CD4-positive, alpha-beta memory T cell (primary cell): ENCODE measurements at regions of chr2 and their contacts with region 1.

Region 1: DNA sequence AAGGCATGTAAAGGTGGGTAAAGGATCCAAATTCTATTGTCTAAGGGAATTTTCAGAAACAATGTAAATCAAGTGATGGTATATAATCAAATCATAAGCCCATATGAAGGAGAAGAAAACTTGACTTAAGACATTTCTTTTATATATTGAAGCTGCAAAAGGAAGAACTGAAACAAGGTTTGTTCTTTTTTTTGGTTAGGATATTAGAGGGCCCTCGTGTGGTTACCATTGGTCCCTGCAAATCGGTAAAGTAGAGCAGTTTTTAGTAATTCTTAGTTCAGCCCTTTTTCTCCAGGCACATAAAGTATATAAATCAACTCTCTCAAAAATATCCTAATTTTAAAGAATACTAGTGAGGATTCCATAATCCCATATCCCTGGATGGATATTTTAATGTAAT is 105.6 kb upstream of the STK17B start:
- DNase-seq: peak; percentile 46 to 70 (median 64)
- H3K4me3 ChIP-seq: no peak overlapping the region
- H3K4me3 Mint-ChIP-seq: peak overlapping the region in 5 of 8 donors; percentile 0 to 75 (median 40)
- H3K27ac ChIP-seq: peak overlapping the region; percentile 34
- H3K27ac Mint-ChIP-seq: peak overlapping the region; percentile 21 to 95 (median 81)
- H3K4me1 ChIP-seq: peaks cover 38% of the 10 kb centered on the region
- H3K4me1 Mint-ChIP-seq: peaks cover 30 to 60% (median 36%) of the 10 kb centered on the region in 4 donors
- H3K27me3 ChIP-seq: no peaks in the 10 kb centered on the region
- H3K27me3 Mint-ChIP-seq: no peaks in the 10 kb centered on the region

Region 2: GRCh38 chr2:196068271-196069209 is 208.5 kb before region 1 on chr2 and contains the start of gene DNAH7:
- CTCF ChIA-PET with region 1: interaction called, 13 read pairs
- POLR2A ChIA-PET with region 1: interaction called, 4 read pairs
- intact Hi-C with region 1: no loop called
- DNase-seq: peak; percentile 92 to 96 (median 92)
- H3K4me3 ChIP-seq: peak within 1 kb of the TSS; percentile 54 to 68
- H3K4me3 Mint-ChIP-seq: peak within 1 kb of the TSS; percentile 84 to 91 (median 86)
- H3K27ac ChIP-seq: peak within 1 kb of the TSS; percentile 27
- H3K27ac Mint-ChIP-seq: peak within 1 kb of the TSS; percentile 81 to 95 (median 86)
- H3K4me1 ChIP-seq: peaks cover 18% of the 10 kb centered on the region
- H3K4me1 Mint-ChIP-seq: peaks cover 5 to 15% (median 8%) of the 10 kb centered on the region in 4 donors
- H3K27me3 ChIP-seq: no peaks in the 10 kb centered on the region
- H3K27me3 Mint-ChIP-seq: peaks cover 1 to 7% of the 10 kb centered on the region in 2 donors
- total RNA-seq, gene DNAH7: not detected

Region 3: DNA sequence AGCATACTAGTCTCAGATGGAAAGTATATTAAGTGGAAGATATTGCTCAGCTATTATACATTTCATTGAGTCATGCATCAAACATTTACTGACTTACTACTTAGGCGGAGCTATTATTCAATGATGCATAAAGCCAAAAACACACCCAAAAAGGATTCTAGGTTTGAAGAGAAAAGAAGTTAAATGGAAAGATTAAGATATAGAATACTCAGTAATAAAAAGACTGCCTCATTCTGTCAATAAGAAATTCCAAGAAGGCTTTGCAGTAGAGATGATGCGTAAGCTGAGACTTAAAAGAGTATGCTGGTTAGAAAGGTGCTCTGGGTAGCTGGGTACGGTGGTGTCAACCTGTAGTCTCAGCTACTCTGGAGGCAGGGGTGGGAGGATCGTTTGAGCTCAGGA is 133.3 kb before region 1 on chr2:
- CTCF ChIA-PET with region 1: interaction called, 14 read pairs
- POLR2A ChIA-PET with region 1: interaction called, 4 read pairs
- intact Hi-C with region 1: no loop called
- DNase-seq: no peak
- H3K4me3 ChIP-seq: no peak overlapping the region
- H3K4me3 Mint-ChIP-seq: peak overlapping the region in 5 of 8 donors; percentile 13 to 74 (median 59)
- H3K27ac ChIP-seq: no peak overlapping the region
- H3K27ac Mint-ChIP-seq: peak overlapping the region; percentile 44 to 89 (median 81)
- H3K4me1 ChIP-seq: peaks cover 72% of the 10 kb centered on the region
- H3K4me1 Mint-ChIP-seq: peaks cover 41 to 77% (median 60%) of the 10 kb centered on the region in 4 donors
- H3K27me3 ChIP-seq: no peaks in the 10 kb centered on the region
- H3K27me3 Mint-ChIP-seq: no peaks in the 10 kb centered on the region

Region 4: DNA sequence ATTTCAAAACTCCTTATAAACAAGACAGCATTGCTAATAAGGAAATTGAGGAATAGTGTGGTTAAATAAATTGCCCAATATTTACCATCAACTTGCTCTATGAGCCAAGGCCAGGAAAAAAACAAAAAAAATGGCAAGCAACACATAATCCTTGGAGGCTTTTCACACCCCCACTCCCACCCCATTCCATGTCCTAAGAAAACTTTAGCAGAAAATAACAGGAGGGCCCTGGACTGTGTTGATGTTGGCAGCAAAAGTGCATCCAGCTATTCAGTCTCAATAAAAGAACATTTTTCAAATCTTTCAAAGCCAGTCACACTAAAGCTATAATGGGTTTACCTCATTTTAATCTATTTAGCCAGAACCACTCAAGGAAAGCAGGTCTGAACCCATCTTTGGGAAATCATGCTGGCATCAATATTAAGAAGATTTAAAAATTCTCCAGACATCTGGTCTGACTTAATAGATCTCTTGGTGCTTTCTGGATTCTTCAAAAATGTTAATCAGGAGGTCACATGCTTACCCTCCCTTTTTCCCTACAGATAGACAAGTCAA is 71.0 kb before region 1 on chr2:
- CTCF ChIA-PET with region 1: interaction called, 6 read pairs
- POLR2A ChIA-PET with region 1: interaction called, 19 read pairs
- intact Hi-C with region 1: loop called (anchors 1 kb)
- DNase-seq: no peak
- H3K4me3 ChIP-seq: no peak overlapping the region
- H3K4me3 Mint-ChIP-seq: no peak overlapping the region
- H3K27ac ChIP-seq: no peak overlapping the region
- H3K27ac Mint-ChIP-seq: peak overlapping the region in 3 of 7 donors; percentile 14 to 85 (median 24)
- H3K4me1 ChIP-seq: peaks cover 53% of the 10 kb centered on the region
- H3K4me1 Mint-ChIP-seq: peaks cover 46 to 55% (median 49%) of the 10 kb centered on the region in 4 donors
- H3K27me3 ChIP-seq: no peaks in the 10 kb centered on the region
- H3K27me3 Mint-ChIP-seq: no peaks in the 10 kb centered on the region

Region 5: DNA sequence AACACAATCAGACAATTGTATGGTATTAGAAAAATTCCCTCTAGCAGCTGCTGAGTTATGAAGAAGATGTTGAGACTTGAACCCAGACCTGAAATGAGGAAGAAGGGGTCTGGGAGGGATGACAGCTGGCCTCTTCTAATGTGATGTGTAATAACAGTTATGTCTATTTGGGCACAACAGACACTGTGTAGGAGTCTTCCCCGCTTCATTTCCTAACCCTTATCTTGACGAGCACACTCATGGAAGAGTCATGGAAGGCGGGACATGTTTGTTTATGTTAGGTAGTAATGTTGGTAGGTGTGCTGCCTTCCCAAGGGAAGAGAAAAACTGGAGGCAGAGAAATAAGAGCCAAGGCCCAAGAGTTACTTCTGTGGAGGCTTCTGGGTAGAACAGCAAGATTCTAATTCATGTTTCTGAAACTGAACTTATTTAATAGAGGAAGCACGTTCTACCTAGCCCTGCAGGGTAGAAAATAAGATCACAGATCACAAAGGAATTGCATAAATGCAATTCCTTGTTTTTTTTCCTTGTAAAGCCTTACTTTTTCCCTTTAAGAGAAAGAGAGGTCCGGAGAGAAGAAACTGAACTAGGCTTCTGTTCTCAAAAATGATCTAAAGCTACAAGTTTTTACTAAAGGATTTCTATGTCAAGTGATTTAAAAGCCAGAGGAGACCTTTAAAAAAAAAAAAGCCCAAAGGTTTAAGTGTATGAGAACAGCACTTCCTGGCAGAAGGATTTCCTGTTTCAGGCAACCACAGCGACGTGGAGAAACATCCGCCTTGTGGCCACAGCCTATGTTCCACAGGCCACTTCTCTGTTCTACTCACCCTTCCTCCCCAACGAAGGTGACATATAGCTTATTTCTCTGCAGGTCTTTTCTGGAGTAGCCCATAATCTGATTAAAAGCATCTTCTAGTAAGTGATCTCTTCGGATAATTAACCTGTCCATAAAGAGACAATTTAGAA is 37.1 kb before region 1 on chr2:
- CTCF ChIA-PET with region 1: interaction called, 67 read pairs
- POLR2A ChIA-PET with region 1: interaction called, 64 read pairs
- intact Hi-C with region 1: loop called (anchors 1 kb)
- DNase-seq: peak; percentile 84 to 90 (median 87)
- H3K4me3 ChIP-seq: peak overlapping the region in 1 of 2 donors; percentile 44
- H3K4me3 Mint-ChIP-seq: peak overlapping the region; percentile 65 to 82 (median 78)
- H3K27ac ChIP-seq: peak overlapping the region; percentile 56
- H3K27ac Mint-ChIP-seq: peak overlapping the region; percentile 95 to 98 (median 96)
- H3K4me1 ChIP-seq: peaks cover 76% of the 10 kb centered on the region
- H3K4me1 Mint-ChIP-seq: peaks cover 62 to 86% (median 70%) of the 10 kb centered on the region in 4 donors
- H3K27me3 ChIP-seq: no peaks in the 10 kb centered on the region
- H3K27me3 Mint-ChIP-seq: no peaks in the 10 kb centered on the region

Region 6: GRCh38 chr2:196291873-196292800 is 15.1 kb after region 1 on chr2:
- CTCF ChIA-PET with region 1: interaction called, 10 read pairs
- POLR2A ChIA-PET with region 1: interaction called, 4 read pairs
- intact Hi-C with region 1: no loop called
- DNase-seq: no peak
- H3K4me3 ChIP-seq: no peak overlapping the region
- H3K4me3 Mint-ChIP-seq: peak overlapping the region; percentile 1 to 66 (median 50)
- H3K27ac ChIP-seq: no peak overlapping the region
- H3K27ac Mint-ChIP-seq: peak overlapping the region; percentile 2 to 81 (median 48)
- H3K4me1 ChIP-seq: peaks cover 49% of the 10 kb centered on the region
- H3K4me1 Mint-ChIP-seq: peaks cover 23 to 54% (median 44%) of the 10 kb centered on the region in 4 donors
- H3K27me3 ChIP-seq: no peaks in the 10 kb centered on the region
- H3K27me3 Mint-ChIP-seq: no peaks in the 10 kb centered on the region